CD4-positive, alpha-beta memory T cell (primary cell): ENCODE measurements at regions of chr20 and their contacts with region 1.

Region 1: GRCh38 chr20:34768096-34768495 is 57.4 kb downstream of the NCOA6 start:
- DNase-seq: no peak
- H3K4me3 ChIP-seq: no peak overlapping the region
- H3K4me3 Mint-ChIP-seq: no peak overlapping the region
- H3K27ac ChIP-seq: no peak overlapping the region
- H3K27ac Mint-ChIP-seq: peak overlapping the region in 2 of 7 donors; percentile 2 to 16
- H3K4me1 ChIP-seq: no peaks in the 10 kb centered on the region
- H3K4me1 Mint-ChIP-seq: no peaks in the 10 kb centered on the region
- H3K27me3 ChIP-seq: no peaks in the 10 kb centered on the region
- H3K27me3 Mint-ChIP-seq: no peaks in the 10 kb centered on the region

Region 2: DNA sequence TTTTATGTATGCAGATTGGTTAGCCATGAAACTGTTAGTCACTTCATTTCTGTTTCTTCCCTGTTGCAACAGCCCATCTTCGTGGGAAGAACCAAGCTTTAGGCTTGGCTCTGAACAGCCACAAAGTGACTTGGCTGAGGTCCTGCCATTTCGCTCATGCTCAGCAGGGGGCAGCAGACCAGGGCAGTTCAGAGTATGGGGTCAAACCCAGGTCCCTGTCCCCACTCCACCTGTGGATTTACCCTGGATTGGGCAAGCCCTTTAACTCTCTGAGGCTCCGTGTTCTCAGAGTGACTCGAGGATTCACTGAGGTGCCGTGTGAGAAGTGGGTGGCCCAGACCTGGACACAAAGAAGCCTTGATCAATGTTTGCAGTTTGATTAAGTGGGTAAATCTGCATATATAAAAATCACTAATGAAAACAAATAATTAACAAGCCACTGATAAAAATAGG is 229.4 kb before region 1 on chr20:
- CTCF ChIA-PET with region 1: interaction called, 59 read pairs
- POLR2A ChIA-PET with region 1: interaction called, 5 read pairs
- intact Hi-C with region 1: loop called (anchors 1 kb)
- DNase-seq: peak in 3 of 5 donors; percentile 41 to 50 (median 47)
- H3K4me3 ChIP-seq: no peak overlapping the region
- H3K4me3 Mint-ChIP-seq: no peak overlapping the region
- H3K27ac ChIP-seq: no peak overlapping the region
- H3K27ac Mint-ChIP-seq: peak overlapping the region; percentile 29 to 73 (median 63)
- H3K4me1 ChIP-seq: peaks cover 34% of the 10 kb centered on the region
- H3K4me1 Mint-ChIP-seq: peaks cover 20 to 43% (median 33%) of the 10 kb centered on the region in 4 donors
- H3K27me3 ChIP-seq: no peaks in the 10 kb centered on the region
- H3K27me3 Mint-ChIP-seq: no peaks in the 10 kb centered on the region

Region 3: GRCh38 chr20:34579979-34580940 is 187.8 kb before region 1 on chr20:
- CTCF ChIA-PET with region 1: no interaction called
- POLR2A ChIA-PET with region 1: no interaction called
- intact Hi-C with region 1: no loop called
- DNase-seq: peak in 3 of 5 donors; percentile 9 to 17 (median 12)
- H3K4me3 ChIP-seq: no peak overlapping the region
- H3K4me3 Mint-ChIP-seq: peak overlapping the region in 5 of 8 donors; percentile 28 to 67 (median 54)
- H3K27ac ChIP-seq: peak overlapping the region; percentile 27
- H3K27ac Mint-ChIP-seq: peak overlapping the region; percentile 63 to 93 (median 92)
- H3K4me1 ChIP-seq: peaks cover 32% of the 10 kb centered on the region
- H3K4me1 Mint-ChIP-seq: peaks cover 13 to 32% (median 27%) of the 10 kb centered on the region in 4 donors
- H3K27me3 ChIP-seq: no peaks in the 10 kb centered on the region
- H3K27me3 Mint-ChIP-seq: no peaks in the 10 kb centered on the region

Region 4: DNA sequence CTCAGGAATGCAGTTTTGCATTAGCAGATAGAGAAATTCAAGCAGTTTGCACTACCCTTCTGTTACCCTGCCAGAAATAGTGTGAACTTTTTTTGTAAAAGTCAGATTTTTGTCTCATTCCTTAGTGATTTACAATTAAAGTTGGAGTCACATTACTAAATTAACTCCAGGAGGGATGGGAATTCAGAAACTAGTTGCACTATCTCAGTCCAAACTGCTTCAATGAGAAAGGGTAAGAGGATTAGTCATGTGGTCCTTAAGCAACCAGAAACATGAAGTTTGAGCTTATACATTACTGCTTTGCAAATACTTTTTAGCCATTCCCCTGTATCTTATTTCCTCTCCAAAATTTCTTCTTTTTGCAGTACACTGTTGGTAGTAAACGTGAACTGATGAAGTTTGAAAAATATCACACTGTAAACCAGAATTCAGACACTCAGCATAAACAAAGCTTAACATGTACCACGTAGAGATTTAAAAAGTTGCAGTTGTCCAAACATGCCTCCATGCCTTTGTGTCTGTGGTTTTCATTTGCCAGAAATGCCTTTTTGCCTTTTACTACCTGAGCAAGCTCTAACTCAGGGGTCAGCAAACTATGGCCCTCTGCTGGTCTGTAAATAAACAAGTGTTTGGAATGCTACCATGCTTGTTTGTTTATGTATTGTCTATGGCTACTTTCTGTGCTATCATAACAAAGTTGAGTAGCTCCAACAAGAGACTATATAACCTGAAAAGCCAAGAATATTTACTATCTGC is 14.2 kb before region 1 on chr20:
- CTCF ChIA-PET with region 1: interaction called, 12 read pairs
- POLR2A ChIA-PET with region 1: no interaction called
- intact Hi-C with region 1: no loop called
- DNase-seq: no peak
- H3K4me3 ChIP-seq: no peak overlapping the region
- H3K4me3 Mint-ChIP-seq: no peak overlapping the region
- H3K27ac ChIP-seq: no peak overlapping the region
- H3K27ac Mint-ChIP-seq: no peak overlapping the region
- H3K4me1 ChIP-seq: no peaks in the 10 kb centered on the region
- H3K4me1 Mint-ChIP-seq: peaks cover 0 to 2% (median 0%) of the 10 kb centered on the region in 4 donors
- H3K27me3 ChIP-seq: no peaks in the 10 kb centered on the region
- H3K27me3 Mint-ChIP-seq: no peaks in the 10 kb centered on the region

Region 5: GRCh38 chr20:34781220-34781619 is 13.1 kb after region 1 on chr20:
- CTCF ChIA-PET with region 1: interaction called, 17 read pairs
- POLR2A ChIA-PET with region 1: no interaction called
- intact Hi-C with region 1: no loop called
- DNase-seq: no peak
- H3K4me3 ChIP-seq: no peak overlapping the region
- H3K4me3 Mint-ChIP-seq: no peak overlapping the region
- H3K27ac ChIP-seq: no peak overlapping the region
- H3K27ac Mint-ChIP-seq: peak overlapping the region in 1 of 7 donors; percentile 12
- H3K4me1 ChIP-seq: no peaks in the 10 kb centered on the region
- H3K4me1 Mint-ChIP-seq: peaks cover 0 to 4% (median 1%) of the 10 kb centered on the region in 4 donors
- H3K27me3 ChIP-seq: no peaks in the 10 kb centered on the region
- H3K27me3 Mint-ChIP-seq: no peaks in the 10 kb centered on the region